MCF 10A (cell line): ENCODE measurements at regions of chr2 and their contacts with region 1.

Region 1: DNA sequence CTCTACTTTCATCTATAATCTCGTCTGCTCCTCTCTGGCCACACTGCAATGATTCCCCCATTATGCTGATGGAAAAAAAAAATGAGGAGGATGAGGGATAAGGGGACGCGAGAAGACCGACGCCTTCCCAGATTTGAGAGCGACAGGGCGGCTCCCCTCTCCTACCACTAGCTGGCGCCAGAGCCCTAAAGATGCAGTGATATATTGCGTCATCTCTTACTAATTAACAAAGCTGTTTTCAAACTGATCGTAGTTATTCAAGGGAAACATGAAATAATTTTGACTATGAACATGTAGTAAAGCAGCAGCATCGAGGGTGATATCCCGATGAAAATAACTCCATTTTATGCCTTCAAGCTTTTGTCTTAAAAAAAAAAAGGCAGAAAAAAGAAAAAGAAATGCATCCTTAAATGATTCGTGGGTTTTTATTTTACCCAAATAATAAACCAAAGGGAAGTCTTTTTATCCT is 48.0 kb upstream of the HNRNPA3 start:
- DNase-seq: peak; percentile 90
- H3K4me3 Mint-ChIP-seq: no peak overlapping the region
- H3K27ac Mint-ChIP-seq: no peak overlapping the region
- H3K4me1 Mint-ChIP-seq: peaks cover 17% of the 10 kb centered on the region
- H3K27me3 Mint-ChIP-seq: no peaks in the 10 kb centered on the region
- CTCF ChIP-seq: peak; percentile 97

Region 2: DNA sequence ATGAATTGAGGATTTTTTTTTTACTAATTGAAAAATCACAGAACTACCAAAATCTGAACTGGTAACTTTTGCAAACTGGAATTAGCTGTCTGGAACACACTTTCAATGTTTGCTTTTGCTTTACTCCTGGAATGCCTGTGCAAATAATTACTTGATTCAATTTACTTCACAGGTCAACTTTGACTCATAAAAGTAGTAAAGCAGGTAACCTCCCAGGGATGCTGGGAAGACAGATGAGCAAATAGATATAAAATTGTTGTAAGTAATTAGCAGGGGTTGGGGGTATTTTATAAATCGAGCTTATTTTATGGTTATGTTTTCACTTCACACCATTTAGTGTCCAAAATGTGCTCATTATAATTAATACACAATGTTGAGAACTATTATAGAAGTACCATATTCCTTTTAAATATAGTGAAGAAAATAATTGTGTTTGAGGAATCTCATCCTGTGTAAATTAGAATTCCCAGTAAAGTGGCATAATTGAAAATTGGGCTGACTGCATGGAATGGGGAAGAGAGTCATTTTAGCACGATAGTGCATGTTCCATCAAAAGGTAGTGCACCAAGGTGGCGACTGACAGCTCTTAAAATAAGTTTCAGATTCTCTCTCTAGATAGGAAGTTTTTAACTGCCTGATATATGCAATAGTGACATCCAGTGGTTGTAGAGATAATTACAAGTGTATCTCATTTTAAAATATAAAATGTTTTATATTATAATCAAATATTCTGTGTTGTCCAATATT is 350.1 kb before region 1 on chr2:
- CTCF ChIA-PET with region 1: no interaction called
- POLR2A ChIA-PET with region 1: no interaction called
- intact Hi-C with region 1: no loop called
- DNase-seq: peak; percentile 38
- H3K4me3 Mint-ChIP-seq: no peak overlapping the region
- H3K27ac Mint-ChIP-seq: no peak overlapping the region
- H3K4me1 Mint-ChIP-seq: no peaks in the 10 kb centered on the region
- H3K27me3 Mint-ChIP-seq: peaks cover 12% of the 10 kb centered on the region
- CTCF ChIP-seq: peak; percentile 59

Region 3: GRCh38 chr2:176830362-176830761 is 334.3 kb before region 1 on chr2:
- CTCF ChIA-PET with region 1: no interaction called
- POLR2A ChIA-PET with region 1: no interaction called
- intact Hi-C with region 1: no loop called
- DNase-seq: peak; percentile 18
- H3K4me3 Mint-ChIP-seq: no peak overlapping the region
- H3K27ac Mint-ChIP-seq: no peak overlapping the region
- H3K4me1 Mint-ChIP-seq: no peaks in the 10 kb centered on the region
- H3K27me3 Mint-ChIP-seq: peaks cover 90% of the 10 kb centered on the region
- CTCF ChIP-seq: no peak

Region 4: GRCh38 chr2:177148477-177149154 is 16.0 kb before region 1 on chr2:
- CTCF ChIA-PET with region 1: interaction called, 17 read pairs
- POLR2A ChIA-PET with region 1: interaction called, 3 read pairs
- intact Hi-C with region 1: no loop called
- DNase-seq: peak; percentile 84
- H3K4me3 Mint-ChIP-seq: peak overlapping the region; percentile 70
- H3K27ac Mint-ChIP-seq: no peak overlapping the region
- H3K4me1 Mint-ChIP-seq: peaks cover 15% of the 10 kb centered on the region
- H3K27me3 Mint-ChIP-seq: peaks cover 66% of the 10 kb centered on the region
- CTCF ChIP-seq: peak; percentile 70

Region 5: GRCh38 chr2:177221534-177221933 is 56.9 kb after region 1 on chr2:
- CTCF ChIA-PET with region 1: interaction called, 10 read pairs
- POLR2A ChIA-PET with region 1: interaction called, 102 read pairs
- intact Hi-C with region 1: no loop called
- DNase-seq: no peak
- H3K4me3 Mint-ChIP-seq: no peak overlapping the region
- H3K27ac Mint-ChIP-seq: no peak overlapping the region
- H3K4me1 Mint-ChIP-seq: peaks cover 15% of the 10 kb centered on the region
- H3K27me3 Mint-ChIP-seq: no peaks in the 10 kb centered on the region
- CTCF ChIP-seq: no peak

Region 6: DNA sequence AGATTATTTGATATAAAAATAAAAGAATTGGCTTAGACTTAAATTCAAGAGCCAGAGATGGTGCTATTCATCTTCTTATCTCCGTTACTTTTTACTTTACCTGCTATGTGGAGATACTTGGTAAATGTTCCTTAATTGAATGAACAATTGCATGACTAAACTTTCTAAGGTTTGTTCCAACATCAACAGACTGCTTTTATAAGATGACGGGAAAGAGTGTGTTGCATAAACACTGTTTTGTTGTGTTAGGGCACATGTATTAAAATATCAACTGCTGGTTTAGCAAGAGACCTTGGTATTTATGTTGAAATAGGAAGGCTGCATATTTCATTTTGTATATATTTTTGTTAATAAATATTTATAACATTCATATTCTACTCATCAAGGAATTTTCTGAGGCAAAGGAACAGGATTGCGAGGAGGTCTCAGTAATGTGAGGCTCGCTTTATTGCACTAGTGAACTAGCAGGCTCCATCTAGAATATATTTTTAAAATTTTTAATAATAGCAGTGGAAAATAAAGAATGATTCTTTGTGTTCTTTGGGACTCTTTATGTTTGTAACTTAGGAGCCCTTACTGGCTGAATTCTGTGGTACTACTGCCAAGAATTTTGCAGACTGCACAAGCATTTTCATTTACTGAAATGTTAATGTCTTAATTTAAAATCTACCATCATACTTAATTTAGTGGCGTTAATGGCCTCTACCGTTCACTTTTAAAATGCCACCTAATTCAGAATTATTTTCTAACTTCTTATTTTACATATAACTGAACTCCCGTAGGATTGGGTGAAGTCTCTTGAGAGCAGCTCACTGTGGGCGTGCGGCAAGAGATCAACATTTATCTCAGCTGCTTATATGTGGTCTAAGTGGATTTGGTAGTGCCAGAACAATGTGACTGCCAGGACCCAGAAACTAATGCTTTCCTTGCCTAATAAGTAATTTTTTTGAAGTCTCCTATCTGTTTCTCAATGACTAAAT is 110.7 kb after region 1 on chr2:
- CTCF ChIA-PET with region 1: interaction called, 5 read pairs
- POLR2A ChIA-PET with region 1: interaction called, 29 read pairs
- intact Hi-C with region 1: no loop called
- DNase-seq: peak; percentile 93
- H3K4me3 Mint-ChIP-seq: peak overlapping the region; percentile 62
- H3K27ac Mint-ChIP-seq: peak overlapping the region; percentile 91
- H3K4me1 Mint-ChIP-seq: peaks cover 20% of the 10 kb centered on the region
- H3K27me3 Mint-ChIP-seq: no peaks in the 10 kb centered on the region
- CTCF ChIP-seq: no peak

Region 7: GRCh38 chr2:177332041-177332991 is 167.7 kb after region 1 on chr2:
- CTCF ChIA-PET with region 1: interaction called, 52 read pairs
- POLR2A ChIA-PET with region 1: interaction called, 16 read pairs
- intact Hi-C with region 1: loop called (anchors 1 kb)
- DNase-seq: peak; percentile 73
- H3K4me3 Mint-ChIP-seq: no peak overlapping the region
- H3K27ac Mint-ChIP-seq: no peak overlapping the region
- H3K4me1 Mint-ChIP-seq: peaks cover 8% of the 10 kb centered on the region
- H3K27me3 Mint-ChIP-seq: no peaks in the 10 kb centered on the region
- CTCF ChIP-seq: peak; percentile 60

Region 8: GRCh38 chr2:177604271-177605065 is 439.9 kb after region 1 on chr2:
- CTCF ChIA-PET with region 1: interaction called, 3 read pairs
- POLR2A ChIA-PET with region 1: no interaction called
- intact Hi-C with region 1: loop called (anchors 10 kb)
- DNase-seq: peak; percentile 58
- H3K4me3 Mint-ChIP-seq: no peak overlapping the region
- H3K27ac Mint-ChIP-seq: no peak overlapping the region
- H3K4me1 Mint-ChIP-seq: peaks cover 5% of the 10 kb centered on the region
- H3K27me3 Mint-ChIP-seq: peaks cover 5% of the 10 kb centered on the region
- CTCF ChIP-seq: peak; percentile 42

Region 9: DNA sequence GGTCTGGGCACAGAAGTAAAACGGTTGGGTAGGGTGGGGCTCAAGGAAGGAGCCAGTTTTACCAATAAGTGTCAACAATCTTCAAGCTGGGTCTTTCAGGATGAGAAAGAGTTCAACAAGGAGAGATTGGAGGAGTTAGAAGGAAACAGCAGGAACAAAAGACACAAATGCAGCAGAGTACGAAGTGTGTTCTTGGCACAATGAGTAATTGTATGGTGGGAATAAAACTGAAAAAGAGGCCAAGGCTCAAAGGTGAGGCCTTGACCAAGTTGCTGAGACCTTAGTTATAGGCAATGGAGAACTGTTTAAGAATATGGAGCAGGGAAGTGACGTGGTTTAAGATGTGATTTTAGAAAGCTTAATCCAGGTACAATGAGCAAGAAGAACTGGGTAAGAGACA is 677.6 kb after region 1 on chr2:
- CTCF ChIA-PET with region 1: no interaction called
- POLR2A ChIA-PET with region 1: no interaction called
- intact Hi-C with region 1: no loop called
- DNase-seq: no peak
- H3K4me3 Mint-ChIP-seq: no peak overlapping the region
- H3K27ac Mint-ChIP-seq: no peak overlapping the region
- H3K4me1 Mint-ChIP-seq: no peaks in the 10 kb centered on the region
- H3K27me3 Mint-ChIP-seq: no peaks in the 10 kb centered on the region
- CTCF ChIP-seq: no peak